GM13977 (cell line): ENCODE measurements at regions of chrX and their contacts with region 1.

Region 1: DNA sequence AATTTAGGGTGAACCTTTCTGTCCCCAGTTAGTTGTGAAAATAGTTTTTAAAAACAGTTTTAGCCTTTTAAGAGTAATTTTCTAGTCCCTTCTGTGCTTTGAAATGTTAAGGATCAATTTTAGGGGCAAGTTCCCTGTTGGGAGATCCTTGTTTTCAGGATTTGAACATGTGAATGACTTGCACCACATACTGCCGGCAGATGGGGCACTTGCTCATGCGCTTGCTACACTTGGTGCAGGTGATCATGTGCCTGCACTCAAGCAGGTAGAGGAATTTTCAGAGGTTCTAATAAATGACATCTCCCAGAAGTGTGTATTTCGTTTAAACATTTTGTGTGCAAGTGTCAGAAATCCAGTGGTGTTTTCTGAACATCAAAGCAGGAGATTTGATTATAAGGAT is 195.9 kb downstream of the CHM start:
- DNase-seq: peak; percentile 8
- CTCF ChIP-seq: peak; percentile 48

Region 2: DNA sequence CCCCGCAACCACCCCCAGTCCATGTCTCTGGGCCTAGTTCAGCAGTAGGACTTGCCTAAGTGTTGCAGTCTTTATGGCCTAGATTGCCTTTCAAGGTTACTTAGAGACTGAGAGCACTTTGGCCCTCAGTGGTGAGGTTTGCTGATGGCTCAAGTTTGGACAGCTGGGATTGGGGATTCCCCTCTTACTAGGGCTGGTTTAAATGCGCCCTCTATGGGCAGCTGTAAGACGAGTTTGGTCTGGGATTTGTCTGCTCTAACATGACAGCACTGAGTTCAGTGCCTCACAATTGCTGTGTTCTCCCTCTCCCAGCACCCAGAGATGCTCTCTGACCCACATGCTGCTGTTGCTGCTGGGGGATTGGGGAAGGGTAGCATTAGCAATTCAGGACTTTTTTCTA is 319.9 kb after region 1 on chrX:
- in situ Hi-C with region 1: loop called (anchors 25 kb)
- DNase-seq: no peak
- CTCF ChIP-seq: peak; percentile 61